Endothelial cell of umbilical vein (primary cell): ENCODE measurements at regions of chr19 and their contacts with region 1.

Region 1: GRCh38 chr19:40798223-40798996 is 581 bp upstream of the EGLN2 start:
- DNase-seq: peak; percentile 100
- H3K4me3 ChIP-seq: peak overlapping the region; percentile 43 to 79 (median 52)
- H3K27ac ChIP-seq: peak overlapping the region; percentile 71
- H3K4me1 ChIP-seq: peaks cover 42% of the 10 kb centered on the region
- H3K27me3 ChIP-seq: no peaks in the 10 kb centered on the region
- CTCF ChIP-seq: peak; percentile 12 to 32
- POLR2A ChIP-seq: no peak

Region 2: DNA sequence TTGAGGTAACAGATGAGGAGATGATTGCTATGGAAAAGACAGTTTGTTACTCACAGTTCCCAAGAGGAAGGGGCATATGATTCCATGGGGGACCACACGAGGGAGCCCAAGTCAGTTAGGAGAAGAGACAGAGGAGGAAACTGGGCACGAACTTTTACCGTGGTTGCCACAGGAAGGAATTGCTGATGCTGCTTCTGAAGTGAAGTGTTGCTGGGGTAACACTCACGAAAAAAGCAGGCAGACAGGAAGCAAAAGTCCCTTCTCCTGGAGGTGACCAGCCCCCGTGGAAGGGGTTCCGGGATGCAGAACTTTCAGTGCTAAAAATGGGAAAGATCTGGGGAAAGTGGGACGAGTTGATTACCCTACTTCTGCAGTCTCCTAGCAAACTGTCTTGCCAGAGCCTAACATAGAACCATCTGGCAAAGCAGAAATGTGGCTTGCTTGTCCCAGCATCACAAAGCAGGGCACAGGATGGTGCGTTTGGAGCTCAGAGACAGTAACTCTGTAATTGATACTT is 642.6 kb before region 1 on chr19:
- CTCF ChIA-PET with region 1: no interaction called
- POLR2A ChIA-PET with region 1: no interaction called
- dilution Hi-C with region 1: no loop called
- intact Hi-C with region 1: no loop called
- DNase-seq: peak; percentile 17
- H3K4me3 ChIP-seq: no peak overlapping the region
- H3K27ac ChIP-seq: no peak overlapping the region
- H3K4me1 ChIP-seq: no peaks in the 10 kb centered on the region
- H3K27me3 ChIP-seq: no peaks in the 10 kb centered on the region
- CTCF ChIP-seq: peak; percentile 23 to 44
- POLR2A ChIP-seq: no peak

Region 3: DNA sequence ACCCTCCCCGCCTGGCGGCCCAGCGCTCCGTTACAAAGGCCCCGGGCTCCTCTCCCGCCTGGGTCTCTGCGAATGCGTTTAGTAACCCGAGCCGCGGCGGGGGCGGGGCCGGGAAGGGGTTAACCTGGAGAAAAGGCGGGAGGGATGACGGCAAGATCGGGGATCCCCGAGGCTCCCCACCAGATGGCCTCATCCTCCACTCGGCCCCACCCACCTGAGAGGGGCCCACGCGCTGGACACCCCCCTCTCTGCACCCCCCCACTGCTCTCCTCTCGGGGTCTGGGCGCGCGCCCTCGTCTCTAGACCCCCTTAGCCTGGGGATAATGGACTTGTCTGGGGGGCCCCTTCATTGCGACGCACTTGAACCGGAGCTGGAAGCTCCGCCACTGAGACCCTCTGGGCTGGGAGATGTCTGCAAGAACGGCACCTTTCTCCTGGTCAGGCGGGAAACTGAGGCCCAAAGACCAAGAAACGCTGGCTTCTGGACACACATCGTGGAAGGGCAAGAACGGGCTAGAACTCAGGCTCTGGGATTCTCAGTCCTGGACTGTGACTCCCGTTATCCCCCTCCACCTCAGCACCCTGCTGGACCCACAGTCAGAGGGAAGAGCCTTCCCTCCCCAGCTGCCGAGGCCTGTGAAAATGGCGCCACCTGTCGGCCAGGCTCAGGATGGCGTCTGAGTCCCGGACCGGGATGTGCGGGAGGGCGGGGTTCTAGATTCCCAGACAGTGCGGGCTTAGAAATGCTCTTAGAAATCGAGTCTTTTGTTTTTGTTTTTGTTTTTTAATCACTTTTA is 200.1 kb before region 1 on chr19:
- CTCF ChIA-PET with region 1: no interaction called
- POLR2A ChIA-PET with region 1: no interaction called
- dilution Hi-C with region 1: no loop called
- intact Hi-C with region 1: no loop called
- DNase-seq: peak; percentile 87
- H3K4me3 ChIP-seq: peak overlapping the region; percentile 1 to 22 (median 5)
- H3K27ac ChIP-seq: no peak overlapping the region
- H3K4me1 ChIP-seq: peaks cover 42% of the 10 kb centered on the region
- H3K27me3 ChIP-seq: peaks cover 4 to 6% of the 10 kb centered on the region in 2 experiments
- CTCF ChIP-seq: peak; percentile 95 to 98
- POLR2A ChIP-seq: peak; percentile 39

Region 4: GRCh38 chr19:40716655-40717324 is 81.6 kb before region 1 on chr19 and contains the starts of genes COQ8B and ITPKC:
- CTCF ChIA-PET with region 1: interaction called, 5 read pairs
- POLR2A ChIA-PET with region 1: no interaction called
- dilution Hi-C with region 1: no loop called
- intact Hi-C with region 1: loop called (anchors 2 kb)
- DNase-seq: peak; percentile 97
- H3K4me3 ChIP-seq: peak within 1 kb of the TSS; percentile 39 to 78 (median 53)
- H3K27ac ChIP-seq: peak within 1 kb of the TSS; percentile 94
- H3K4me1 ChIP-seq: peaks cover 52% of the 10 kb centered on the region
- H3K27me3 ChIP-seq: no peaks in the 10 kb centered on the region
- CTCF ChIP-seq: no peak
- POLR2A ChIP-seq: peak; percentile 62
- total RNA-seq, gene COQ8B: 15.3 and 19.2 TPM in 2 replicates
- total RNA-seq, gene ITPKC: 16.1 and 16.9 TPM in 2 replicates

Region 5: DNA sequence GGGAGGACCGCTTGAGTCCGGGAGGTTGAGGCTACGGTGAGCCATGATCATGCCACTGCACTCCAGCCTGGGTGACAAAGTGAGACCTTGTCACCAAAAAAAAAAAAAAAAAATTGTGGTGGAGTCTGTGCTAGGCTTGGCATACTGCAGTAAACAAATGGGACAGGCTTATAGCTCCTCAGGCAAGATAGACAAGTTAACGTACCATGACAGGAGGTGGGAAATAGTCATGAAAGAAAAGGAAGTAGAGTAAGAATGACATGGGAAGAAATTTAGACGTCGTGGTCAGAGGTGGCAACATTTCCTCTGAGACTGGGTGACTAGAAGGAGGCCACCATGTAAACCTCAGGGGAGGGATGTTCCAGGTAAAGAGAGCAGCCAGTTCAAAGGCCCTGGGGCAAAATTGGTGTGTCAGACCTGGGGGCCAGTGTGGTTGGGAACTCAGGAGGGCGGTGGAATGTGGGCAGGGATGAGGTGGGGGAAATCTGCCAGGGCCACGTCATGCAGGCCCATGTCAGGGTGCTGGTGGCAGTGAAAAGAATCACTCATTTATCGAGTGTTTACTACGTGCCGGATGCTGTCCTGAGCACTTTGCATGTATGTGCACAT is 41.8 kb before region 1 on chr19:
- CTCF ChIA-PET with region 1: interaction called, 5 read pairs
- POLR2A ChIA-PET with region 1: no interaction called
- dilution Hi-C with region 1: no loop called
- intact Hi-C with region 1: loop called (anchors 1 kb)
- DNase-seq: no peak
- H3K4me3 ChIP-seq: no peak overlapping the region
- H3K27ac ChIP-seq: no peak overlapping the region
- H3K4me1 ChIP-seq: peaks cover 36% of the 10 kb centered on the region
- H3K27me3 ChIP-seq: no peaks in the 10 kb centered on the region
- CTCF ChIP-seq: no peak
- POLR2A ChIP-seq: no peak

Region 6: DNA sequence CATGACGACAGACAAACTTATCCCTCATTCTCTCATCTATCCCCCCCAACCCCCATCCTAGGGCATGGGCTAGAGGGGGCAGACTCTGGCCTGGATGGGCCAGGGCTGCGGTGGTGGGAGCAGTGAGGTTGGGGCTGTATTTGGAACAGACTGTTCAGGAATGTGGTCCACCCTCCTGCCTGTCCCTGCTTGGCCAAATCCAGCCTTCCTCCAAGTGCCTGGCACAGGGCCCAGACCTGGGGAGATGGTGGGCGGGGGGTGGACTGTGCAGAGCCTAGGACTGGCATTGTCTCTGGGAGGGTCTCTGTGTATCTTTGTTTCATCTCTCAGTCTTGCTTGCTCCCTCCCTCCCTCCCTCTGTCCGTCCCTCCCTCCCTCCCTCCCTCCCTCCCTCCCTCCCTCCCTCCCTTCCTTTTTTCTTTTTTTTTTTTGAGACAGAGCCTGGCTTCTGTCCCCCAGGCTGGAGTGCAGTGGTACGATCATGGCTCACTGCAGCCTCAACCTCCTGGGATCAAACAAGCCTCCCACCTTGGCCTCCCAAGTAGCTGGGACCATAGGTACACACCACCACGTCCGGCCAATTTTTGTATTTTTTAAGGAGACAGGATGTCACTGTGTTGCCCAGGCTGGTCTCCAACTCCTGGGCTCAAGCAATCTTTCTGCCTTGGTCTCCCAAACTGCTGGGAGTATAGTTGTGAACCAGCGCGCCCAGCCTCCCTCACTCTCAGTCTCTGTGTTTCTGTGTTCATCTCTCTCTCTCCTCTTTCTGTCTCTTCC is 15.0 kb after region 1 on chr19:
- CTCF ChIA-PET with region 1: interaction called, 31 read pairs
- POLR2A ChIA-PET with region 1: no interaction called
- dilution Hi-C with region 1: no loop called
- intact Hi-C with region 1: no loop called
- DNase-seq: no peak
- H3K4me3 ChIP-seq: no peak overlapping the region
- H3K27ac ChIP-seq: no peak overlapping the region
- H3K4me1 ChIP-seq: peaks cover 11% of the 10 kb centered on the region
- H3K27me3 ChIP-seq: peaks cover 3 to 8% of the 10 kb centered on the region in 2 experiments
- CTCF ChIP-seq: no peak
- POLR2A ChIP-seq: no peak

Region 7: GRCh38 chr19:40831502-40832442 is 33.4 kb after region 1 on chr19:
- CTCF ChIA-PET with region 1: no interaction called
- POLR2A ChIA-PET with region 1: no interaction called
- dilution Hi-C with region 1: no loop called
- intact Hi-C with region 1: no loop called
- DNase-seq: no peak
- H3K4me3 ChIP-seq: no peak overlapping the region
- H3K27ac ChIP-seq: no peak overlapping the region
- H3K4me1 ChIP-seq: no peaks in the 10 kb centered on the region
- H3K27me3 ChIP-seq: no peaks in the 10 kb centered on the region
- CTCF ChIP-seq: no peak
- POLR2A ChIP-seq: no peak